Dendritic cell treated with granulocyte-macrophage colony-stimulating factor and Interleukin-4, amounts not matched to agents 40 ng/mL and 50 ng/mL, for 4 days (primary cell): ENCODE measurements at regions of chr1 and their contacts with region 1.

Region 1: DNA sequence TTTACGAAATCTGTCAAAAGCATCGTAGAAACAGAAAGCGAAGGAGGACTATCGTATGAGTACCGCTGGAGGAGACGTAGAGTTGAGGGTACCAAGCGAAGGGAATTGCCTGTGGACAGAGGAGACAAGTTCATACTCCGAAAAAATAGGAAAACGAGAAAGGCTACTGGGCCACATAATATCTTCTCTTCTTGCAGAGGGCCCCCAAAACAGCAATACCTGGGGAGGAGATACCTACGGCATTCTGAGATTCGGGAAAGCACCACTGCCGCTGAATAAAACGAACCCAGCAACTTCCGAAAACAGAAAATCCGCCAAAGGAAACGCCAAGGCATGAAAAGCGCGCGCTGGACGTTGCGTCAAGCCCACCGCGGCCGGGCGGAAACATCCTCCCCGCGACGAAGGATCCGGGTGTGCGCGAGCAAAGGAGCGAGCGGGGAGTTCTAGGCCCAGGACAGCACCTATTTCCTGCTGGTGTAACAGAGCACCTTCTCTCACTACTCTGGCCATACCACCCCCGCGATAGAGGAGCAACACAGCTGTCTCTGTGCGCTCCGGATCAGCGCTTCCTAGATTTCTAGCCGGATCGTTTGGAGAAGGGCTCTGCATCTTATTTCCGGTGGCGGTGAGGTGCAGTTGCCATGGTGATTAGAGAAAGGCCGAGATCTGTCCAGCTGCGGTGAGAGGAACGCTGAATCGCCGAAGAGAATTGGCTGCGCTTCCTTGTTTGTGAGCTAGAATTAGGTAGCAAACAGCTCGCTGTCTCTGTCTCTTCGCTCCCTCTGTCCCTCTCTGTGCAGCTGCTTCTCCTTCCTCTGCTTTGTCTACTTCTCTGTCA is at the starts of genes EFCAB7 and ITGB3BP:
- H3K4me3 Mint-ChIP-seq: peak within 1 kb of the TSS; percentile 86
- H3K27ac Mint-ChIP-seq: peak within 1 kb of the TSS; percentile 95
- H3K4me1 Mint-ChIP-seq: peaks cover 7% of the 10 kb centered on the region
- H3K27me3 Mint-ChIP-seq: no peaks in the 10 kb centered on the region

Region 2: DNA sequence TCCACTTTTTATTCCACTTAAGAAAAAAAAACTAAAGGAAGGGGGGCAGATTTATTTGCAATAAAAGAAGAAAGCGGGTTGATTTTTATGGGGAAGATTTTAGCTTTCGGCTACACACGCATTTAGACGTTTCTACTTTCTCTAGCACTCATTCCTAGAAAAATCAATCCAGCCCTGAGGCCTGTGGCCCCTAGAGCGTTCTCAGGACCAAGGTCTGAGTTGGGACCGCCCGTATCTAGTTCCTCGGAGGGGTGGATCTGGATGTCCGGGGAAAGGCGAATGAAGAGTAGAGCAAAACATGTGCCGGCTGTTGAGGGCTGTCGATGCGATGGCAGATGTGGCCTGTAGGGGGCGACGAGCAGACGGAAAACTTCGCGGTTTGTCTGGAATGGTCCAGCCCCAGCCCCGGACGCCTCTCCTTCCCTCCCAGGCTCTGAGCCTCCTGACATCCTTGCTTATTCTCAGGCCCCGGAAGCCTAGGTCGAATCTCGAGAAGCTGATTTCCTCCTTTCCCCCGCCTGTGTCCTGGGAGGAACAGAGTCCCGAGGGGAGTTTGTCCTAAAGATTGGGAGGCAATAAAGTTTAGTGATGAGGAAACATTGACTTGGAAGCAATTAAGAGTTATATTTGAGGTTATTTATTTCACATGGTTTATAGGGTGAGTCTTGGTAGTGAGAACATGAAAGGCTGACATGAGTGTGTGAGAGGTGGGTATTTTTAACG is 195.5 kb before region 1 on chr1:
- intact Hi-C with region 1: loop called (anchors 2 kb)
- H3K4me3 Mint-ChIP-seq: no peak overlapping the region
- H3K27ac Mint-ChIP-seq: no peak overlapping the region
- H3K4me1 Mint-ChIP-seq: peaks cover 40% of the 10 kb centered on the region
- H3K27me3 Mint-ChIP-seq: peaks cover 80% of the 10 kb centered on the region